ENCODE measurements at regions of chr2 and their contacts with region 1.

Region 1: DNA sequence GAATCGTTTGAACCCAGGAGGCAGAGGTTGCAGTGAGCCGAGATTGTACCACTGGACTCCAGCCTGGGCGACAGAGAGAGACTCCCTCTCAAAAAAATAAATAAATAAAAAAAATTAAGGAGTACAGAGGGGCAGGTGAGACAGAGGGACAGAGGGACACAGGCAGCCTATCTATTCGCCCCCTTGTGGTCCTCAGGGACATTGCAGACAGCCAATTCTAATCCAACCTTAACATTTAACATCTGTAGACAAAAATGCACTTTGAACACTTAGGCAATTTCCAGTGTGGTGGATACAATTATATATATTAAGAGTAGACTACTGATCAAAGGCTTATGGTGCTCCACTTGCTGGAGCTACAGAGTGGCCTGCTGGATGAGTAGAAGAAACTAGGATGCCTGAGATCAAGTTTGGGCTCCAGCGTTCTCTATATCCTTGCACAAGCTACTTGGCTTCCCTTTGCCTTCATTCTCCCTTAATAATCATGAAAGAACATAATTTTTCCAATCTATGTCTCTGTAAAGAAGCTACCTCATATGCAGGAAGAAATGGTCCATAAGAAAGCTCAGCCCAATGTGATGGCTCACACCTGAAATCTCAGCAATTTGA is 8.2 kb upstream of the SMARCAL1 start:
- DNase-seq: no peak
- H3K4me3 ChIP-seq: no peak overlapping the region
- H3K27ac ChIP-seq: no peak overlapping the region
- H3K27me3 ChIP-seq: peaks cover 2% of the 10 kb centered on the region
- CTCF ChIP-seq: peak; percentile 84

Region 2: DNA sequence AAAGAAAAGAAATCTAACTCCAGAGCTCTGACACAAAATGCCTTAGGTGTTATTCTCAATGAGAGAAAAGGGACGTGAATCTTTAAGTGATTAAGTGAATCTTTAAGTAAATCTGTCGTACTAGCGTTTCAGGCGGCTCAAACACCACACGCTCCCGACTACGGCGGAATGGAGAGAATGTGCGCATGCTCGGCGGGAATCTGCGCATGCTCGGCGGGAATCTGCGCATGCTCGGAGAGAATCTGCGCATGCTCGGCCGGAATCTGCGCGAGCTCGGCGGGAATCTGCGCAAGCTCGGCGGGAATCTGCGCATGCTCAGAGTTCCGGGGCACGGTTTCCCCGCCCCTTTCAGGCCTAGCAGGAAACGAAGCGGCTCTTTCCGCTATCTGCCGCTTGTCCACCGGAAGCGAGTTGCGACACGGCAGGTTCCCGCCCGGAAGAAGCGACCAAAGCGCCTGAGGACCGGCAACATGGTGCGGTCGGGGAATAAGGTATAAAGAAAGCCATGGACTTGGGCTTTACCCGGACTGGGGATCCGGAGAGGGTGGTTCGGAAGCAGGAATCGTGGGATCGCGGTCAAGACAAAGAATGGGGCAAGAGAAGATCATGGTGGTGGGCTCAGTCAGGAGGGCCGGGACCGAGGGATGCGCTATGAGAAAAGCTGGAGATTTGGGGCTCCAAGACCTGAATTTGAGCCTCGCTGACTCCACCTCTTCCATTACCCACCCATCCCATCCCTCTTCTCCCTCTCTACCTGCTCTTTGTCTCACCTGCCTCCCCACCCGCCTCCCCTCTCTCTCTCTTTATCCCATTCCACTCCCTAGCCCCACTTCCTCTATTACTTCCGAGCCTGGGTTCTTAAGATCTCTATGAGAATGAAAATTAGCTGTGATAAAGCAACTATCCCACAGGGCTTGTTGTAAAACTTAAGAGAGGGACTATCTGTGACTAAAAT is 294.9 kb before region 1 on chr2 and contains the start of gene XRCC5:
- CTCF ChIA-PET with region 1: interaction called, 12 read pairs
- POLR2A ChIA-PET with region 1: no interaction called
- DNase-seq: peak; percentile 96
- H3K4me3 ChIP-seq: peak within 1 kb of the TSS; percentile 97
- H3K27ac ChIP-seq: peak within 1 kb of the TSS; percentile 89
- H3K27me3 ChIP-seq: no peaks in the 10 kb centered on the region
- CTCF ChIP-seq: no peak
- polyA plus RNA-seq, gene XRCC5: 427 and 471 TPM in 2 replicates

Region 3: DNA sequence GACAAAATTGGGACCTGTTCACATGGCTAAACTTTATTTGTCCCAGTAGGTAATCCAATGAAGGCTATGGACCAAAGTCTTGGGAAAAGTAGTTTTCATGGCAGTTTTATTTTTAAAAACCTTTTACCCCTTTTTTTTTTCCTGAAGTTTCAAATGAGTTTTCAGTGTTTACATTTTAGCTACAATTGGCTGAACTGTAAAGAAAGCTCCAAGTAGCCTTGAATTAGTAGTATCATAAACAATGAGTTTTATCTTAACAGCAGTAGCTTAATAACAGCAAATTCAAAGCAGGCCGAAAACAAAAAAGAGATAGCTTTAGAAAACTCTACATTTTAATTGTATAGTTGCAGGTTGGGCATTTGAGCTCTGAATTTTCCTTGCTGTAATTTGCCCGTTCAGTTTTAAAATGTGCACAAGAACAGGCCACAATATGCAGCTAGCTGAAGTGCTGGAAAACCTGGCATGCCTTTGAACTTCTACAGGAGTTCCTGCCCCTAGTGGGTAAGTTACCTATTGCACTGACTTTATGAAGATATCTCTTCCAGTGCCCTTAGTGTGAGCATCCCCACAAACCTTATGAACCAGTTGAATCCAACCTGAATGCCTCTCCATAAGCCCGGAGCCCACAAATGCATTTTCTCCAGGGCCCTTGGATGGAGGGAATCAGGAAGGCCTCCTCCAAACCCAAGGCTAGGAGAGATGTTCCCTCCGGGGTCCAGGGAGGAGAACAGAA is 188.3 kb before region 1 on chr2:
- CTCF ChIA-PET with region 1: interaction called, 38 read pairs
- POLR2A ChIA-PET with region 1: no interaction called
- DNase-seq: no peak
- H3K4me3 ChIP-seq: no peak overlapping the region
- H3K27ac ChIP-seq: no peak overlapping the region
- H3K27me3 ChIP-seq: no peaks in the 10 kb centered on the region
- CTCF ChIP-seq: peak; percentile 61

Region 4: GRCh38 chr2:216328347-216328746 is 75.8 kb before region 1 on chr2:
- CTCF ChIA-PET with region 1: interaction called, 18 read pairs
- POLR2A ChIA-PET with region 1: no interaction called
- DNase-seq: no peak
- H3K4me3 ChIP-seq: no peak overlapping the region
- H3K27ac ChIP-seq: no peak overlapping the region
- H3K27me3 ChIP-seq: no peaks in the 10 kb centered on the region
- CTCF ChIP-seq: peak; percentile 67

Region 5: GRCh38 chr2:216379977-216380376 is 24.1 kb before region 1 on chr2:
- CTCF ChIA-PET with region 1: interaction called, 24 read pairs
- POLR2A ChIA-PET with region 1: no interaction called
- DNase-seq: no peak
- H3K4me3 ChIP-seq: no peak overlapping the region
- H3K27ac ChIP-seq: no peak overlapping the region
- H3K27me3 ChIP-seq: no peaks in the 10 kb centered on the region
- CTCF ChIP-seq: no peak